HAP-1 (cell line): ENCODE measurements at regions of chr11 and their contacts with region 1.

Region 1: GRCh38 chr11:57667736-57668435 is at the start of gene ZDHHC5:
- DNase-seq: peak; percentile 97 to 99
- H3K4me3 ChIP-seq: peak within 1 kb of the TSS; percentile 75
- H3K4me1 ChIP-seq: peaks cover 5% of the 10 kb centered on the region; the same call in 1 of the 2 replicates
- H3K27me3 ChIP-seq: no peaks in the 10 kb centered on the region

Region 2: GRCh38 chr11:57345555-57346211 is 322.2 kb before region 1 on chr11:
- in situ Hi-C with region 1: loop called (anchors 10 kb)
- DNase-seq: peak; percentile 52 to 86
- H3K4me3 ChIP-seq: no peak overlapping the region
- H3K4me1 ChIP-seq: peaks cover 20% of the 10 kb centered on the region
- H3K27me3 ChIP-seq: no peaks in the 10 kb centered on the region

Region 3: DNA sequence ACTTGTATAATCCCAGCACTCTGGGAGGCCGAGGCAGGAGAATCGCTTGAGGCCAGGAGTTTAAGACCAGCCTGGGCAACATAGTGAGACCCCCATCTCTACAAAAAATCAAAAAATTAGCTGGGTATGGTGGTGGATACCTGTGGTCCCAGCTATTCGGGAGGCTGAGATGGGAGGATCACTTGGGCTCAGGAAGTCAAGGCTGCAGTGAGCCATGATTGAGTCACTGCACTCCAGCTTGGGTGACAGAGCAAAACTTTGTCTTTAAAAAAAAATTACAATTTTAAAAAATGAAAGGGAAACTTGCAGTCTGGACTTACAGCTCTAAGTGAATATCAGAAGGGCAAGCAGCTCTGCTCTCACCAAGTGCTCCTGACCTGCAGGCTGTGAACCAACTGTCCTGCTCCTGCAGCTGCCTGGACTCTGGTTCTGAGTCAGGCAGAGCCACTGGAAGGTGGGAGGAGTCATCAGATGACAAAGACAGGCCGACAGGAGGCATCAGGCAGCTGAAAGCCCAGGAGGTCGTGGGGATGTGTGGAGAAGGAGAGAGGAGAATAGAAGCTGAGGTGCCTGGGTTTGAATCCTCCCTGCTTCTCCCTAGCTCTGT is 120.9 kb before region 1 on chr11:
- in situ Hi-C with region 1: no loop called
- DNase-seq: peak in 1 of 2 experiments; percentile 22
- H3K4me3 ChIP-seq: no peak overlapping the region
- H3K4me1 ChIP-seq: no peaks in the 10 kb centered on the region
- H3K27me3 ChIP-seq: no peaks in the 10 kb centered on the region

Region 4: GRCh38 chr11:57567515-57568329 is 100.2 kb before region 1 on chr11 and contains the start of gene UBE2L6:
- in situ Hi-C with region 1: no loop called
- DNase-seq: peak; percentile 41 to 67
- H3K4me3 ChIP-seq: peak within 1 kb of the TSS; percentile 66
- H3K4me1 ChIP-seq: peaks cover 2% of the 10 kb centered on the region; the same call in 1 of the 2 replicates
- H3K27me3 ChIP-seq: no peaks in the 10 kb centered on the region

Region 5: DNA sequence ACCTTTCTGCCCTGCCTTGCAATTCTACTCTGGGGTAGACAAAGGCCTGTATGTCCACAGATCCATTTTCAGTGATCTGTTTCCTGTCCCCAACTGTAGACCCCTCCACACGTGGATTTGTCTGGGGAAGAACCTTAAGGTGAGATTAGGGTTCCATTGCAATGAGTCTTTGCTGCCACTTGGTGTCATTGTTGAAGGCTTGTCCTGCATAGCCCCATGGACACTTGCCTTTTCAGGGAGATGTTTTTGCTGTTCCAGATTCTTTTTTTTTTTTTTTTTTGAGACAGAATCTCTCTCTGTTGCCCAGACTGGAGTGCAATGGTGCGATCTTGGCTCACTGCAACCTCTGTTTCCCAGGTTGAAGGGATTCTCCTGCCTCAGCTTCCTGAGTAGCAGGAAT is 48.6 kb before region 1 on chr11:
- in situ Hi-C with region 1: no loop called
- DNase-seq: no peak
- H3K4me3 ChIP-seq: no peak overlapping the region
- H3K4me1 ChIP-seq: no peaks in the 10 kb centered on the region
- H3K27me3 ChIP-seq: no peaks in the 10 kb centered on the region

Region 6: DNA sequence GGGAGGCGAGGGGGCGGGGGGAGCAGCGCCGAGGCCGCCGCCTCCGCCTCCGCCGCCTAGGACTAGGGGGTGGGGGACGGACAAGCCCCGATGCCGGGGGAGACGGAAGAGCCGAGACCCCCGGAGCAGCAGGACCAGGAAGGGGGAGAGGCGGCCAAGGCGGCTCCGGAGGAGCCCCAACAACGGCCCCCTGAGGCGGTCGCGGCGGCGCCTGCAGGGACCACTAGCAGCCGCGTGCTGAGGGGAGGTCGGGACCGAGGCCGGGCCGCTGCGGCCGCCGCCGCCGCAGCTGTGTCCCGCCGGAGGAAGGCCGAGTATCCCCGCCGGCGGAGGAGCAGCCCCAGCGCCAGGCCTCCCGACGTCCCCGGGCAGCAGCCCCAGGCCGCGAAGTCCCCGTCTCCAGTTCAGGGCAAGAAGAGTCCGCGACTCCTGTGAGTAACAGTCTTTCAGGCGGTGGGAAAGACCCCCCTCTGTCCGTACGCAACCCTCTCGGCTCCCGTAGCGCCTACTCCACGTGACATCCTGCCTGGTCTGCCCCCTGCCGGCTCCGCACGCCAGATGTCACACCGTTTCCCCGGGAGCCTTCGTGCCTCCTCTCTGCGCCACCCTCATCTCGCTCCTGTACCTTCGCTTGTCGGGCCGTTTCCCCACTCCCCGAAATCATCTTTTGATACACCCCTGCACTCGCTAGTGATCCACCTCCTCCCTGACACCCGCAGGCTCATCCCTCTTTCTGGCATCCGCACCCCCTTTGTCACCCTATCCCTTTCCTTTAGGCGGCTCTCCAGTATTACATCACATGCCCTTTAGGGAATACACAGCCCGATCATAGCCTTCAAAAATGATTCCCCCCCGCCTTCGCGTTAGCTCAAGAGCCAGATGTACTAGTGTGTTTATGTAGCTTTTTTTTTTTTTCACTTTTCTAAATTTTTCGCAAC is 911.6 kb after region 1 on chr11:
- in situ Hi-C with region 1: loop called (anchors 10 kb)
- DNase-seq: peak; percentile 83 to 93
- H3K4me3 ChIP-seq: peak overlapping the region; percentile 100
- H3K4me1 ChIP-seq: peaks cover 11% of the 10 kb centered on the region
- H3K27me3 ChIP-seq: no peaks in the 10 kb centered on the region